ENCODE measurements at regions of chr17 and their contacts with region 1.

Region 1: GRCh38 chr17:64320613-64321553 is 57.8 kb upstream of the TEX2 start:
- DNase-seq: peak; percentile 87
- H3K4me3 ChIP-seq: peak overlapping the region; percentile 54
- H3K27ac ChIP-seq: no peak overlapping the region
- H3K4me1 ChIP-seq: peaks cover 1% of the 10 kb centered on the region; the same call in 1 of the 2 replicates
- H3K27me3 ChIP-seq: no peaks in the 10 kb centered on the region

Region 2: GRCh38 chr17:64406321-64407200 is 85.7 kb after region 1 on chr17:
- in situ Hi-C with region 1: loop called (anchors 5 kb)
- DNase-seq: peak; percentile 42
- H3K4me3 ChIP-seq: no peak overlapping the region
- H3K27ac ChIP-seq: no peak overlapping the region
- H3K4me1 ChIP-seq: no peaks in the 10 kb centered on the region
- H3K27me3 ChIP-seq: no peaks in the 10 kb centered on the region